Gastrocnemius medialis (tissue), 4 donors: ENCODE measurements at regions of chr5 and their contacts with region 1.

Region 1: GRCh38 chr5:107217721-107218130 is 453.0 kb downstream of the EFNA5 start:
- DNase-seq: peak; percentile 91 to 97
- ATAC-seq: peak; percentile 87 to 92
- H3K4me3 ChIP-seq: no peak overlapping the region
- H3K27ac ChIP-seq: peak overlapping the region; percentile 86 to 94 (median 88)
- H3K4me1 ChIP-seq: peaks cover 25 to 38% of the 10 kb centered on the region in 2 donors
- H3K27me3 ChIP-seq: no peaks in the 10 kb centered on the region
- CTCF ChIP-seq: no peak
- POLR2A ChIP-seq: no peak

Region 2: GRCh38 chr5:107058239-107058638 is 159.5 kb before region 1 on chr5:
- in situ Hi-C with region 1: no loop called
- intact Hi-C with region 1: loop called (anchors 5 kb)
- DNase-seq: peak; percentile 34 to 46
- ATAC-seq: peak; percentile 90 to 96
- H3K4me3 ChIP-seq: no peak overlapping the region
- H3K27ac ChIP-seq: peak overlapping the region; percentile 42 to 83 (median 74)
- H3K4me1 ChIP-seq: peaks cover 16 to 32% of the 10 kb centered on the region in 2 donors
- H3K27me3 ChIP-seq: no peaks in the 10 kb centered on the region
- CTCF ChIP-seq: no peak
- POLR2A ChIP-seq: no peak

Region 3: DNA sequence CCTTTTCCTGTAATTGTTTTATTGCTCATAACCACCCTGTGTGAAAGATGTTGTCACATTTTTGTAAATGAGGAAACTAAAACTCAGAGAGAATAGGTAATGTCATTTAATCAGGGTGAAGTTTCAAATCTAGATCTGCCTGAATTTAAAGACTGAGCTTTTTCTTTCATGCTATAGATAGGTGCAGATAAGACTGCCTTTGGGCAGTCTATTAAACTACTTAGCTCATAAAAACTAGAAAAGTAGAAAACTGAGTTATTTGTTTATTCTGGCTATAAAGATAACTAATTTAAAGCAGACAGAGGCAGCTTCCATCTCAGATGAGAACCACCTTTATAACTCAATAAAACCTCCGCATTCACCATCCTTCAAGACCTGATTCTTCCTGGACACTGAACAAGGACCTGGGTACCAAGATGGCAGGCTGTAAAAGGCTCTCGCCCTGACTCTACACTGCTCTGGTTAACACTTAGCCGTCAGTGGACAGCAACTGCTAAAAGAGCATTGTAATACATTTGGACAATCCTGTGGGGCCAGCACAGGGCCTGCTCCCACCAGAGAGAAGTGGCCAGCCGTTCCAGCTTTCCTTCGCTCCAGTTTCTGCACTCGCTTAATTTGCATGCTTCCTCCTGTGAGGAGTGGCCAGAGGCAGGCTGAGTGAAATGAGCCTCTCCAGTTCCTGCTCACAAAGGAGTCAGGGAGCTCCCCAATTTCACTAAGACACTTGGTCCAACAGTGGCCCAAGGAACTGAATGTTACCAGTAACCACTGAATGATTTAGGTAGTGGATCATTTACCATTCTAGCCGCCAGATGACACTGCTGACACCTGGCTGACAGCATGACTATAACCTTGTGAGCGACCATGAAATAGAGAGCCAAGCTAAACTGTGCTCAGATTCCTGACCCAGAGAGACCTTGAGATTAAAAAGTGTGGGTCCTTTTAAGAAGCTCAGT is 113.4 kb before region 1 on chr5:
- in situ Hi-C with region 1: no loop called
- intact Hi-C with region 1: loop called (anchors 10 kb)
- DNase-seq: peak; percentile 37 to 74
- ATAC-seq: peak; percentile 95 to 99
- H3K4me3 ChIP-seq: no peak overlapping the region
- H3K27ac ChIP-seq: peak overlapping the region; percentile 68 to 75 (median 71)
- H3K4me1 ChIP-seq: peaks cover 3 to 6% of the 10 kb centered on the region in 2 donors
- H3K27me3 ChIP-seq: no peaks in the 10 kb centered on the region
- CTCF ChIP-seq: peak; percentile 19 to 44 (median 24)
- POLR2A ChIP-seq: no peak

Region 4: DNA sequence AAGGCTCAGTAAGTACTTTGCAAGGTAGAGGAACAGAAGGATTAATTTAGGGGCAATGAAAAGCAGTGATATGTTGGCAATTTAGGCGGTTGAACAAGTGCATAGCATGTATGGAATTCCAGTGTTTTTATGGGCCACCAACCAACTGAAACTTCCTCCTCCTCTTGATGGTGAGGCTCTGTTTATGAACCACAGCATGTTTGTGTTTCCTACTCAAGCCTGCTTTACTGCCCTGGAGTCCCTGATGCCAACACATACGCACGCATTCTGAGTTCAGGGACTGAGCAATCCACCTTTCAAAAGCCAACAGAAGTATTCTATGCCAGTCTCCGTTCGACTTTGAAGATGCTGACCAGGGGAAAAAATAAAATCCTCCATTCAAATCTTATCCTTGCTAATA is 35.5 kb after region 1 on chr5:
- in situ Hi-C with region 1: no loop called
- intact Hi-C with region 1: loop called (anchors 5 kb)
- DNase-seq: no peak
- ATAC-seq: peak in 1 of 2 donors; percentile 30
- H3K4me3 ChIP-seq: no peak overlapping the region
- H3K27ac ChIP-seq: peak overlapping the region in 1 of 4 donors; percentile 36
- H3K4me1 ChIP-seq: peaks cover 2 to 9% of the 10 kb centered on the region in 2 donors
- H3K27me3 ChIP-seq: no peaks in the 10 kb centered on the region
- CTCF ChIP-seq: no peak
- POLR2A ChIP-seq: no peak

Region 5: DNA sequence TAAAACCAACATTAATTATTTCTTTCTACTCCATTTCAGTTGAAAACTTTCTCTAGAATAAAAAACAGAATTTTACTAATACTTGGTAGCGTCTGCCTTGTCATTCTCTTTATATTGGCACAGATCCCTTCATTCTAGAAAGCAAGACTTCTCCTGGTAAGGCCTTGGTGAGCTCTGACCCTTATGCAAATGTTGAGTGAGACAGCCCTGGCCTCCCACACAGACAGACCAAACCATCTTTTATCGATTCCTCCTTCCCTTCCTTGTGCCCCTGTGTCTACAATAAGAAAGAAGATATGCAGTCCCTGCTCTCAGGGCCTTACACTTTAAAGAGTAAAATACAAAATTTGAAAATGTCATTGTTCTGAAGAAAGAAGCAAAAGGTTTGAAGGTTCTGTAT is 190.8 kb after region 1 on chr5:
- in situ Hi-C with region 1: no loop called
- intact Hi-C with region 1: no loop called
- DNase-seq: no peak
- ATAC-seq: no peak
- H3K4me3 ChIP-seq: no peak overlapping the region
- H3K27ac ChIP-seq: no peak overlapping the region
- H3K4me1 ChIP-seq: no peaks in the 10 kb centered on the region
- H3K27me3 ChIP-seq: no peaks in the 10 kb centered on the region
- CTCF ChIP-seq: no peak
- POLR2A ChIP-seq: no peak

Region 6: GRCh38 chr5:107571621-107572536 is 354.2 kb after region 1 on chr5:
- in situ Hi-C with region 1: no loop called
- intact Hi-C with region 1: loop called (anchors 5 kb)
- DNase-seq: peak; percentile 75 to 87
- ATAC-seq: peak; percentile 93 to 97
- H3K4me3 ChIP-seq: peak overlapping the region; percentile 53 to 80 (median 61)
- H3K27ac ChIP-seq: peak overlapping the region; percentile 47 to 77 (median 66)
- H3K4me1 ChIP-seq: peaks cover 10 to 16% of the 10 kb centered on the region in 2 donors
- H3K27me3 ChIP-seq: no peaks in the 10 kb centered on the region
- CTCF ChIP-seq: peak; percentile 81 to 94 (median 89)
- POLR2A ChIP-seq: no peak